Breast epithelium (tissue), 4 donors: ENCODE measurements at regions of chr1 and their contacts with region 1.

Region 1: DNA sequence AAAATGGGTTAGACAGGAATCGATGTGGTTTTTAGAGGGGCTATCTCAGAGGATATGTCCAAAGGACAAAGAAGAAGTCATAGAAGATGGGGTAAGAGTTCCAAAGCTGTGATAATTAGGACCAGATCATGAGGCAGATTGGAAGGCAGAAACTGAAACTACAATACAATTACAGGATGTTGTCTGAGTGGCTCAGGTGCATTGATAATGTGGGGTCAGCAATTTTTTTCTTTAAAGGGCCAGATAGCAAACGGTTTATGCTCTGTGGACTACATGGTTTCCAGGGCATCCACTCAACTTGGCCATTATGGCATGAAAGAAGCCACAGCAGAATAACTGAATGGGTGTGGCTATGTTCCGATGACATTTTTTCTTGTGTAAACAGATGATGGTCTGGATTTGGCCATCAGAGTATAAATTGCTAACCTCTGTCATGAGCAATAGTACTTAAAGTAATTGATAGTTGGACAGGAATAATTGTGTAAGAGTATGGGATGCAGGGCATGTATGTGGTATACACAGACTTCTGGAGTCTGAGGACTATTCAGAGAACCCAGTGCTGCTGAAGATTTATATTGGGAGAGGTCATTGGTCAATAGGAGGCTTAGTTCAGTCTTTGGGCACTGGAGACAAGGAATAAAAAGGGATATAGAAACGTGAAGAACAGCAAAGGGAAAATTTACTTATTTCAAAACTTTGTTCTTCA is 198.4 kb upstream of the ADGRL4 start:
- DNase-seq: no peak
- H3K4me3 ChIP-seq: no peak overlapping the region
- H3K27ac ChIP-seq: no peak overlapping the region
- H3K4me1 ChIP-seq: no peaks in the 10 kb centered on the region
- H3K27me3 ChIP-seq: no peaks in the 10 kb centered on the region
- CTCF ChIP-seq: no peak
- POLR2A ChIP-seq: no peak

Region 2: DNA sequence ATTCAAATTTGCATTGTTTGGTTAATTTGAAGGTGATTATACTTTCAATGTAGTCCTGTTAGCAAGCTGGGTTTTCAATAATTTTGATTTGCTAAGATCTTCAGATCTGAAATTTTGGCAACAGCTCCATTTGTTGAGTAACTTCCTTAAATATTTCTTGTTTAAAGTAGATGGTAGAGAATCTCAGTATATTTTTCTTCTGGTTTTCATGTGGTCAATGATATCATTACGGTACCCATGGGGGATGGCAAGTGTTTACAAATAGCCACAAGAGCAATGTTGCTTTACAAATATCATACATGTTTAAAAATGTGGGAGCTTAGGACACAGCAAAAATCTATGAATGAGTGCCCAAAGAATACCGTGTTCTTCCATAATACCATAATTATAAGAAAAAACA is 379.4 kb before region 1 on chr1:
- intact Hi-C with region 1: loop called (anchors 5 kb)
- DNase-seq: no peak
- H3K4me3 ChIP-seq: no peak overlapping the region
- H3K27ac ChIP-seq: no peak overlapping the region
- H3K4me1 ChIP-seq: no peaks in the 10 kb centered on the region
- H3K27me3 ChIP-seq: no peaks in the 10 kb centered on the region
- CTCF ChIP-seq: no peak
- POLR2A ChIP-seq: no peak